K562 (cell line): ENCODE measurements at regions of chr19 and their contacts with region 1.

Region 1: GRCh38 chr19:54882758-54883157 is 8.7 kb downstream of the FCAR start:
- DNase-seq: no peak
- ATAC-seq: no peak
- H3K4me3 ChIP-seq: no peak overlapping the region
- H3K27ac ChIP-seq: no peak overlapping the region
- H3K4me1 ChIP-seq: peaks cover 0 to 15% of the 10 kb centered on the region in 2 experiments; a peak in 3 of 5 replicates
- H3K27me3 ChIP-seq: peaks cover 7 to 20% of the 10 kb centered on the region in 2 experiments
- CTCF ChIP-seq: peak; percentile 23 to 41 (median 31); a peak in 3 of 6 replicates
- EP300 ChIP-seq: no peak
- POLR2A ChIP-seq: no peak
- RAD21 ChIP-seq: peak in 1 of 2 experiments; percentile 38; a peak in 1 of 4 replicates

Region 2: DNA sequence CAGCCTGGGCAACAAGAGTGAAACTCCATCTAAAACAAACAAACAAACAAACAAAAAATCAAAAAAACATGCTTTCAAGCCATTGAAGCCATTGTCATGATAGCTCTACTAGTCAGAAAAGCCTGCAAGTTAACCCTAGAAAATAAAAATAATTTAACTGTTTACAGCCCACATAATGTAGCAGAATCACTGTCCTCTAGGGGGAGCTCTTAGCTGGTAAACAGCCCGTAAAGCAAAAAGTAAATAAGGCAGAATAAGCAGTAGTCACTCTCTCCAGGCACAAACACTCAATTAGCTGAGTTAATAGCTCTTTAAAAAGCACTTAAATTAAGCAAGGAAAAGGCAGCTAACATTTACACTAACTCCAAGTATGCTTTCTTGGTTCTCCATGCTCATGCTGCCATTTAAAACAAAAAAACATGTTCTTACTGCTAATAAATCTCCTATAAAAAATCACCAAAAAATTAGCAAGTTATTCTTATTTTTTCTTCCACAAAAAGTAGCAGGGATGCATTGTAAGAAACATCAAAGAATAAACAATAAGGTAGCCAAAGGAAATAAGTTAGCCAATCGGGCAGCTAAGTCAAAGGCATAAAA is 208.6 kb before region 1 on chr19:
- CTCF ChIA-PET with region 1: no interaction called
- POLR2A ChIA-PET with region 1: no interaction called
- in situ Hi-C with region 1: no loop called
- intact Hi-C with region 1: loop called (anchors 10 kb)
- DNase-seq: peak; percentile 54 to 75 (median 56)
- ATAC-seq: peak; percentile 83
- H3K4me3 ChIP-seq: no peak overlapping the region
- H3K27ac ChIP-seq: no peak overlapping the region
- H3K4me1 ChIP-seq: no peaks in the 10 kb centered on the region
- H3K27me3 ChIP-seq: peaks cover 2 to 19% of the 10 kb centered on the region in 2 experiments; a peak in 4 of 5 replicates
- CTCF ChIP-seq: peak; percentile 60 to 89 (median 76); a peak in 5 of 6 replicates
- EP300 ChIP-seq: no peak
- POLR2A ChIP-seq: no peak
- RAD21 ChIP-seq: peak; percentile 51 to 76

Region 3: DNA sequence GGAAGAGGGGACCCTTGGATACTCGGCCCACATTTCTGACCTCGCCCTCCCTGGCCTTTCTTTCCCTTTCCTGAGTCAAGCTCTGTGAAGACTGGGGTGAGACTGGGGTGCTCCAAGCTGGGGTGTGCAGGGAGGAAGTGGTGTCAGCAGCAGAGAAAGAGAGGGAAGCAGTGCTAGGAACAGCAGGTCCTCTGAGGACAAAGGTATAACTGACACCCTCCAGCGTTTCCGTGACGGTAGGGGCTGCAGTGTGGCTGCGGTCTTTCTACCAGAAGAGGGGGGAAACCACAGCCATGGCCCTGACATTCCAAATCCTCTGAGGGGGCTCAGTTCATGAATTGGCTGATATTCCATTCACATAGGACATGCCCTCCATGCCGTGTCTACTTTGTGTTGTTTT is 31.4 kb before region 1 on chr19:
- CTCF ChIA-PET with region 1: no interaction called
- POLR2A ChIA-PET with region 1: no interaction called
- in situ Hi-C with region 1: no loop called
- intact Hi-C with region 1: no loop called
- DNase-seq: no peak
- ATAC-seq: no peak
- H3K4me3 ChIP-seq: no peak overlapping the region
- H3K27ac ChIP-seq: no peak overlapping the region
- H3K4me1 ChIP-seq: no peaks in the 10 kb centered on the region; a peak in 1 of 5 replicates
- H3K27me3 ChIP-seq: peaks cover 0 to 17% of the 10 kb centered on the region in 2 experiments; a peak in 3 of 5 replicates
- CTCF ChIP-seq: no peak
- EP300 ChIP-seq: no peak
- POLR2A ChIP-seq: no peak
- RAD21 ChIP-seq: no peak

Region 4: DNA sequence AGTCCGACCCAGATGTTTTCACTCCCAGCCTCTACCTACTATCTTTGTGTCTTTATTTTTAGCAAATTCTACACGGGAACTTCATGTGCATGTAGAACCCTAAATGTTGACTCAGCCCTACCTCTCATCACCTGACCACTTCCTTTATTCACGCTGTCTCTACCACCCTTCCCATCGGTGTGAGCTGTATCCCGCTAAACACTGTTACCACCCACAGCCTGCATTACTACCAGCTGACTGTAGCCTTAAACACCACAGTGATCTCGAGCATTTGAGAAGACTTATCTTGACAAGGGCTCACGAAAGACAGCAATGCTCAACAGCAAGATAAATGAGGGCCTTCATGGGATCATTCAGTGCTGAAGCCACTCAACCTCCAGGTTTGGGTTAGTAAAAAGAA is 38.3 kb after region 1 on chr19:
- CTCF ChIA-PET with region 1: interaction called, 4 read pairs
- POLR2A ChIA-PET with region 1: no interaction called
- in situ Hi-C with region 1: loop called (anchors 5 kb)
- intact Hi-C with region 1: loop called (anchors 1 kb)
- DNase-seq: no peak
- ATAC-seq: no peak
- H3K4me3 ChIP-seq: no peak overlapping the region
- H3K27ac ChIP-seq: no peak overlapping the region
- H3K4me1 ChIP-seq: peaks cover 11 to 12% of the 10 kb centered on the region in 2 experiments; a peak in 4 of 5 replicates
- H3K27me3 ChIP-seq: peaks cover 0 to 9% of the 10 kb centered on the region in 2 experiments; a peak in 1 of 5 replicates
- CTCF ChIP-seq: no peak
- EP300 ChIP-seq: no peak
- POLR2A ChIP-seq: no peak
- RAD21 ChIP-seq: no peak

Region 5: DNA sequence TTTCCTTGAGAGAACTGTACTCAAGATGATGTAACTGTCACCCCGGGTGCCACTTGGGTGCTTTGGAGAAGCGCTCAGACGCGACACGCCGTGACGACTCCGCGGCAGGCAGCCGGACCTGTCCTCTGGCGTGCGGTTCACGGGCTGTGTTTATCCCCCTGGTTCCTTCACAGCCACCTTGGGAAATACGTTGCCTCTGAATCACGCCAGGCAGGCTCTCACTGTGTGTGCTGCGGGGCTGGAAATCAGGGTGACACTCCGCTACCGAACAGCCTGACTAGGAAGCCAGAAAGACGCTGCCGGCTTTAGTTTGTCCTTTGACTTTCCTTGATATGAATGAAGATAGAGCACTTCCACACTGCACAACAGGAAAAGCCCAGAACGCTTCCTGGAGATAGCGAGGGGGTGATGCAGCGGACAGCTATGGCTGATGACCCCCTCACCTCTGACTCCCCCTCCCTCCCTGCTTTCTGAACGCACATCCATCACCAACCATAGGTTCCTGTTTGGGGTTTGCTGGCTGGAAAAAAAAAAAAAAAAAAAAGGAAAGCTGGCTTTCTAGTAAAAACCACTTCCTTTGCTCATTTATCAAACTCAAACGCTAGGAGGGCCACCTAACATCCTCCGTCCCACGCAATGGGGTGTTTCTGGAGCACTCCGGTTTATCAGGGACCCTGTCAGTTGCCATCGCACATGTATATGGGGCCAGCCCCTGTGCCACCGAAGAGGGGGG is 159.0 kb after region 1 on chr19:
- CTCF ChIA-PET with region 1: no interaction called
- POLR2A ChIA-PET with region 1: interaction called, 5 read pairs
- in situ Hi-C with region 1: no loop called
- intact Hi-C with region 1: loop called (anchors 10 kb)
- DNase-seq: peak; percentile 59 to 89 (median 72)
- ATAC-seq: peak; percentile 55
- H3K4me3 ChIP-seq: peak overlapping the region; percentile 20; the same call in 1 of the 2 replicates
- H3K27ac ChIP-seq: peak overlapping the region; percentile 96
- H3K4me1 ChIP-seq: peaks cover 44 to 51% of the 10 kb centered on the region in 2 experiments
- H3K27me3 ChIP-seq: no peaks in the 10 kb centered on the region
- CTCF ChIP-seq: no peak
- EP300 ChIP-seq: peak; percentile 83
- POLR2A ChIP-seq: peak; percentile 65; the same call in 1 of the 2 replicates
- RAD21 ChIP-seq: no peak

Region 6: DNA sequence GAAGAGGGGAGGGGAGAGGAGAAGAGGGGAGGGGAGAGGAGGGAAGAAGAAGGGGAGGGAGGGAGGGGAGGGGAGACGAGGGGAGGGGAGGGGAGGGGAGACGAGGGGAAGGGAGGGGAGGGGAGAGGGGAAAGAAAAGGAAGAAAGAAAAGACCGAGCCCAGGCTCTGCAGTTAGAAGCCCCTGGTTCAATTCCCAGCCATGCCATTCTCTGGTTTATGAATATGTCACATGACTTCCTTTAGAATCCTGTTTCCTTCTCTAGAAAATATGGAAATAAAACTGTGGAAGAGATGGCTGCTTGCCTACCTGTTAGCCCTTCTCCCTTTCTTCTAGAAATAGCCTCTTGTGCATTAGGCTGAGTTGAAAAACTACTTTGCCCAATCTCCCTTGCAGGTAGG is 252.0 kb after region 1 on chr19:
- CTCF ChIA-PET with region 1: no interaction called
- POLR2A ChIA-PET with region 1: no interaction called
- in situ Hi-C with region 1: no loop called
- intact Hi-C with region 1: loop called (anchors 1 kb)
- DNase-seq: no peak
- ATAC-seq: no peak
- H3K4me3 ChIP-seq: no peak overlapping the region
- H3K27ac ChIP-seq: 0 out of 3 replicates have a peak overlapping the region, but pooled peaks have one; percentile 48
- H3K4me1 ChIP-seq: peaks cover 0 to 15% of the 10 kb centered on the region in 2 experiments; a peak in 2 of 5 replicates
- H3K27me3 ChIP-seq: no peaks in the 10 kb centered on the region
- CTCF ChIP-seq: no peak
- EP300 ChIP-seq: no peak
- POLR2A ChIP-seq: no peak
- RAD21 ChIP-seq: no peak